ENCODE measurements at regions of chr1 and their contacts with region 1.

Region 1: GRCh38 chr1:7783826-7784491 is at the start of gene PER3:
- DNase-seq: peak; percentile 95 to 99 (median 98)

Region 2: DNA sequence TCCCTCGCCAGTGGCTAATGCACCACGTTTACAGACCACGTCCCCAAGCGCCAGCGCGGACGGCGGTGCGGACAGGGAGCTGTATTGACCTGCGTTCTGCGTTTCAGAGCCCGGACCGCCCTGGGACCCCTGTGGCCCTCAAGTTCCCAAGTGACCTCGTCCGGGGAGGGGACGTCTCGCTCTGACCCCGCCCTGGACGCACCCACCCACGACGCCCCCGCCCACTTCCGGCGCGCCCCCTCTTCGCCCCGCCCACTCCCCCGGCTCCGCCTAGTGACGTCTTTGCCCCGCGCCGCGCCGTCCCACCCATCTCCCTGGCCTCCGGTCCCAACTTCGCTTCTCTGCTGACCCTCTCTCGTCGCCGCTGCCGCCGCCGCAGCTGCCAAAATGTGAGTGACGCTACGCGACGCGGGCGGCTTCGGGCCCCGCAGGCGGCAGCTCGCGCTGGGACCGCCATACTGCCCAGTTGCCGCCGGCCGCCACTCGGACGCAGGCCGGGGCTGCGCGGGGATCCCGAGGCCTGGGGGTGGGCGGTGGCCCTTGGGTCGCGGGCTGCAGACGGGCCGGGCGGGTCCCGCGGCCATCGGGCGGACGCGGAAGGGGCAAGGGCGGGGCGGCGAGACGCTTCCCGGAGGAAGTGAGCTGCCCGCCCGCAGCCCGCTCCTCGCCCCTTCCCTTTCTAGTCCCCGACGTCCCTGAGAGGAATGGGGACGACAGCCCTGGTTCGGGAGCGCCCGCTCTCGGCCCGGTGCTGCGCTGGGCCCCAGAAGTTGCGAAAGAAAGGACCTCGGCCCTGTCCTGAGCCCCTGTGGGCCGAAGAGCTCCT is 12.7 kb before region 1 on chr1 and contains the start of gene VAMP3:
- intact Hi-C with region 1: loop called (anchors 1 kb)
- DNase-seq: peak; percentile 57 to 96 (median 90)

Measured in head of caudate nucleus (tissue), 42 donors.